ENCODE measurements at regions of chr2 and their contacts with region 1.

Region 1: GRCh38 chr2:102806250-102806837 is 44.5 kb downstream of the TMEM182 start:
- DNase-seq: peak; percentile 31 to 85
- H3K4me3 ChIP-seq: no peak overlapping the region
- H3K27ac ChIP-seq: no peak overlapping the region
- H3K4me1 ChIP-seq: no peaks in the 10 kb centered on the region
- H3K27me3 ChIP-seq: no peaks in the 10 kb centered on the region
- CTCF ChIP-seq: peak; percentile 73 to 90 (median 83)
- EP300 ChIP-seq: no peak
- POLR2A ChIP-seq: no peak
- RAD21 ChIP-seq: peak; percentile 81

Region 2: GRCh38 chr2:102736410-102737409 is 69.6 kb before region 1 on chr2:
- CTCF ChIA-PET with region 1: interaction called, 11 read pairs
- POLR2A ChIA-PET with region 1: no interaction called
- DNase-seq: peak; percentile 57 to 91
- H3K4me3 ChIP-seq: peak overlapping the region; percentile 83 to 98 (median 96)
- H3K27ac ChIP-seq: peak overlapping the region; percentile 53; the same call in 1 of the 2 replicates
- H3K4me1 ChIP-seq: peaks cover 0 to 9% (median 1%) of the 10 kb centered on the region in 4 experiments; a peak in 4 of 7 replicates
- H3K27me3 ChIP-seq: no peaks in the 10 kb centered on the region
- CTCF ChIP-seq: no peak
- EP300 ChIP-seq: no peak
- POLR2A ChIP-seq: peak in 1 of 2 experiments; percentile 62; a peak in 2 of 3 replicates
- RAD21 ChIP-seq: no peak

Region 3: GRCh38 chr2:102753563-102754159 is 52.7 kb before region 1 on chr2:
- CTCF ChIA-PET with region 1: interaction called, 122 read pairs
- POLR2A ChIA-PET with region 1: no interaction called
- DNase-seq: no peak
- H3K4me3 ChIP-seq: no peak overlapping the region
- H3K27ac ChIP-seq: no peak overlapping the region
- H3K4me1 ChIP-seq: 0 out of 7 replicates have a peak, but pooled peaks cover 0 to 2% (median 0%) of the 10 kb centered on the region in 4 experiments
- H3K27me3 ChIP-seq: no peaks in the 10 kb centered on the region
- CTCF ChIP-seq: peak in 2 of 3 experiments; percentile 48 to 62; a peak in 3 of 4 replicates
- EP300 ChIP-seq: no peak
- POLR2A ChIP-seq: no peak
- RAD21 ChIP-seq: peak; percentile 35 to 41; a peak in 3 of 4 replicates

Region 4: DNA sequence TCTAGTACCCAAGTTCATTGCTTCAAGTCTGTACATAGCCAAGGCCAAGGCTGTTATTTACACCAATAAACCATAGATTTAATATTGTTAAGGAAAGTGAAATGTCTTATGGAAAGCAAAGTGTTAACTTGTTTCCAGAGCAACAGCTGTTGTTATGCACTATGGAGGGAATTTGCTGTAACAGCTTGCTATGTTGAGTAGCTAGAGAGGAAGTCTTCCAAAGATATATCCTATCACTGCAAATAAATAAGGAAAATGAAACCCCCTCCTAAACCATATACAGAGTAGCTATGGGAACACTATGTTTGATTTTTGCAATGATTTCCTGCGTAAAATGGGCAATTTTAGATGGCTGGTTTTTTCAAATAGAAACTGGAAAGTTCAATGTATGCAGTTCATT is 23.4 kb before region 1 on chr2:
- CTCF ChIA-PET with region 1: interaction called, 14 read pairs
- POLR2A ChIA-PET with region 1: no interaction called
- DNase-seq: no peak
- H3K4me3 ChIP-seq: no peak overlapping the region
- H3K27ac ChIP-seq: peak overlapping the region; percentile 14; the same call in 1 of the 2 replicates
- H3K4me1 ChIP-seq: peaks cover 0 to 3% (median 1%) of the 10 kb centered on the region in 4 experiments; a peak in 3 of 7 replicates
- H3K27me3 ChIP-seq: no peaks in the 10 kb centered on the region
- CTCF ChIP-seq: no peak
- EP300 ChIP-seq: no peak
- POLR2A ChIP-seq: no peak
- RAD21 ChIP-seq: no peak

Region 5: GRCh38 chr2:102796337-102796736 is 10.0 kb before region 1 on chr2:
- CTCF ChIA-PET with region 1: interaction called, 14 read pairs
- POLR2A ChIA-PET with region 1: no interaction called
- DNase-seq: no peak
- H3K4me3 ChIP-seq: no peak overlapping the region
- H3K27ac ChIP-seq: no peak overlapping the region
- H3K4me1 ChIP-seq: 0 out of 7 replicates have a peak, but pooled peaks cover 0 to 3% (median 0%) of the 10 kb centered on the region in 4 experiments
- H3K27me3 ChIP-seq: no peaks in the 10 kb centered on the region
- CTCF ChIP-seq: no peak
- EP300 ChIP-seq: no peak
- POLR2A ChIP-seq: no peak
- RAD21 ChIP-seq: no peak

Measured in H1 (cell line).